Ascending aorta (tissue), 2 donors: ENCODE measurements at regions of chr10 and their contacts with region 1.

Region 1: DNA sequence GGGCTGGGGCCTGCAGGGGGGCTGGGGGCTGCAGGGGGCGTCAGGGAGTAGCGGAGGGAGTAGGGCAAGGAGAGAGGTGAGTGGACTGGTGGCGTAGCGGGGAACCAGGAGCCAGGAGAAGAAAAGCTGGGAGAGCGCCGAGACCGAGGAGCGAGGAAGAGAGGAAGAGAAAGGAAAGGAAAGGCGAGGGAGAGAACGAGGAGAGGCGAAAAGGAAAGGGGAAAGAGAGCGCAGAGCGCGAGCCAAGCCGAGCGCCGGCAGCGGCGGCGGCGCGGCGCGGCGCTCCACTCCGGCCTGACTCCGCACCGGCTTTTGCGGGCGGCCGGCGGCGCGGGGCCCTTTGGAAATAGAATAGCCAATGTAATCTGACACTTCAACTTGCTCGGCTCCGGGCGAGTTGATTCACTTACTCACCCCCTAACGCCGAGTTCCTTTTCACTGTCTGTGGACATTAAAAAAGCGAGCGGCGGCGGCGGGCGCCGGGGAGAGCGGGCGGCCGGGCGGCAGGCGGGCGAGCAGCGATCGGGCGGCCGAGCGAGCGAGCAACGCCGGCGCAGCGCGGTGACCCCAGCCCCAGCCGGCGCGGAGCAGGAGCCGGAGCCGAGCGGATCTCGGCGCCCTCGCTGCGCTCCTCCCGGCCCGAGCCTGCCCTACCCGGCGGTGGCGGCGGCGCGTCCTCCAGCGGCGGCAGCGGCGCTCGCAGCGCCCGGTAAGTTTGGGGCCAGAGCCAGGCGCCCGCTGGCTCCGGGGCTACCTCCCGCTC is at the start of gene ZMIZ1:
- DNase-seq: peak; percentile 63 to 95
- H3K4me3 ChIP-seq: peak within 1 kb of the TSS; percentile 90 to 98
- H3K27ac ChIP-seq: peak within 1 kb of the TSS; percentile 98 to 99
- H3K4me1 ChIP-seq: peaks cover 10 to 29% of the 10 kb centered on the region in 2 donors
- H3K27me3 ChIP-seq: no peaks in the 10 kb centered on the region
- CTCF ChIP-seq: peak in 2 of 3 experiments; percentile 8 to 38
- total RNA-seq, gene ZMIZ1: 96.2 TPM

Region 2: DNA sequence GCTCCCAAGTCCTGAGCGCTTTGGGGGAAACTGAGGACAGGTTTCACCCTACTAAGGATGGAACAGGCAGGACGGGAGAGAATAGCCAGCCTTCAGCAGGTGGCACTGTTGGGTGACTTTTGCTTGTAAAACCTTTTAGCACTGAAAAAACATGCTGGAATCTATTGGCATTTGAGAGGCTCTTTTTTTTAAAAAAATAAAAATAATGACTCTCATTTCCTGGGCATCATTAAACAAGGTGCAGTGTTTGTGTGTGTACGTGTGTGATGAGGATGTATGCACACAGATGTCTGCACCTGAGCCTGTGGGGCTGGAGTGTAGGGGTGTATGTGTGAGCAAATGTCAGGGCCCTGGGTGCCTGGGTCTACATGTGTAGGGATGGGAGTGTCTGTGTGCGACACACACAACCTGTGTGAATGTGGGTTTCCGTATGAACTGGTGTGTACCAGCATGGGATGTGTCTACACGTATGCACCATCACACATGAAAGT is 857.1 kb before region 1 on chr10:
- intact Hi-C with region 1: loop called (anchors 1 kb)
- DNase-seq: no peak
- H3K4me3 ChIP-seq: no peak overlapping the region
- H3K27ac ChIP-seq: no peak overlapping the region
- H3K4me1 ChIP-seq: peaks cover 4 to 13% of the 10 kb centered on the region in 2 donors
- H3K27me3 ChIP-seq: no peaks in the 10 kb centered on the region
- CTCF ChIP-seq: peak; percentile 42 to 72 (median 45)

Region 3: GRCh38 chr10:78543749-78544362 is 524.9 kb before region 1 on chr10:
- intact Hi-C with region 1: loop called (anchors 10 kb)
- DNase-seq: peak in 1 of 2 donors; percentile 89
- H3K4me3 ChIP-seq: no peak overlapping the region
- H3K27ac ChIP-seq: peak overlapping the region; percentile 39 to 53
- H3K4me1 ChIP-seq: peaks cover 0 to 5% of the 10 kb centered on the region in 2 donors
- H3K27me3 ChIP-seq: no peaks in the 10 kb centered on the region
- CTCF ChIP-seq: no peak

Region 4: DNA sequence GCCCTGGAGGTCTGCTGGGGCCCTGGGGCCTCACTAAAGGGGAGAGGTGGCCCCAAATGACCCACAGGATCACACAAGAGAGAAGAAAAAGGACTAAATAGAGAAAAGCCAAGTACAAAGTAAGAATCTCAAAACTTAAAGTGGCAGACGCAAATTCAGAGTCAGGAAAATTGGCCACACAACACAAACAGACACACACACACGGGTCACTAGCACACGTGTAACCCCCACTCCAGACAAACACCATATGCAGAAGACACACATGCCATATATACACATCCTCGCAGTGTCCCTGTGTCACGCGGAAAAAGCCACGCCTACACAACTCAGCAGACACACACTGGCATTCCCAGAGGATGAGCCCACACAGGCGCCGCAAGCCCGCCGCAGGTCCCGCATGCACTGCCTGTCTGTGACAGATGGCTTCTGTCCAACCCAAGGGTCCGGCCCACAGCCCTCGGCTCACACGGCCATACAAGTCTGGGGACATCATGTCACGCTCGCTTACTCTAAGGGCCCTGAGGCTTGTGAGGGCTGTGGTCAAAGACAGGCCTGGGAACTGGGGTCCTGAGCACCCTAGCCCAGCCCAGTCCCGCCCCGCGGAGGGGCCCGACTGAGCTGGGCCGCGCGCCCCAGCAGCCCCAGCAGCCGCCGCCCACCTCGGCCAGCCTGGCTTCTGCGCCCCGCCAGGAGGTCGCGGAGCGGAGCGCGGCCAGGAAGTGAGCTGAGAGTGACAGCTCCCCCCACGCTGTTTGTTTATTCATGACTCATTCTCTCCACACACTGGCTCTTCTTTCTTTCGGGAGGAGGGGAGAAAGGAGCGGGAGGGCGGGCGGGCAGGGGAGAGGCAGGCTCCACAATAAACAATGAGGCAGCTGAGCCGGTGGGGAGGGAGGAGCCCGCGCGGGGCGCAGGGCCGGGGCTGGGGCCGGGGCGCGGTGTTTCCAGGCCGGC is 95.5 kb before region 1 on chr10:
- intact Hi-C with region 1: loop called (anchors 1 kb)
- DNase-seq: peak; percentile 49 to 90
- H3K4me3 ChIP-seq: peak overlapping the region; percentile 64 to 67
- H3K27ac ChIP-seq: peak overlapping the region; percentile 95 to 98
- H3K4me1 ChIP-seq: peaks cover 6 to 22% of the 10 kb centered on the region in 2 donors
- H3K27me3 ChIP-seq: no peaks in the 10 kb centered on the region
- CTCF ChIP-seq: no peak

Region 5: DNA sequence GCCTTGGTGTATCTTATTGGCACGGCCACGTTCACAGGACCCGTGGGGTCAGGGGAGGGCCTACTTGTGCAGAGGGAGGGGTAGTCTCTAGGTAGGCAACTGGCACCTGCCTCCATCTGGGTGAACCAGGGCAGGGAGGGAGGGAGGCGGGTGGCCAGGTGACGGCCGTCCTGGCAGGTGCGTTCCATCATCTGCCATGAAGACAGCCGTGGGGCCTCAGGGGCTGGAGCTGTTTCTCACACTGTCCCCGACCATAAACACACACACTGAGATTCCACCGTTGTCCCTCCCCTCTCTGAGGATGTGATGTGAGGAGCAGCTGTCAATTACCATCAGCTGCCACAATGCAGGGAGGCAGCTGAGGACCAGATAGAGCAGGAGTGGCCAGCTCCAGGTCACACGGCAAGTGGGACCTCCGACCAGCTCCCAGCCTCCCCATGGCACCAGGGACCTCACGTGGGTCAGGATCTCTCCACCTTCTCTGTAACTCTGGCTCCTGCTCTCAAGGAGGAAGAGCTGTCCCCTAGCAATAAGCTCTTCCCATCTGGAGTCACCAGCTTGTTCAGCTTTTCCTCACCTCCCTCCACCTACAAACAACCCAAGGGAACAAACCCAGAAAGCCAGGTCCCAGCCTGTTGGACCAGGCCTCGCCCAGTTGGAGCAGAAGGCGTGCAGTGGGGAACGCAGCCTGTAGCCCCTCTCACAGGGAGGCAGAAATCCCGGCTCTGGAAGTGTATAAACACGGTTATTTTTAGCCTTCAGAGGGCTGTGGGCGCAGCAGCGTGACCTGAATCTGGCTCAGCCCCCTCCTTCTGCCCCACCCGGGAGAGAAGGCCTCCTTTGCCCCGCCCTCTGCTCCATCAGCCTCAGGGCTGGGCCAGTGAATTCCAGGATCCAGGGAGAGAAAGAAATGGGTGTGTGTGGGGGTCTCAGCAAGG is 33.1 kb after region 1 on chr10:
- intact Hi-C with region 1: loop called (anchors 1 kb)
- DNase-seq: peak in 1 of 2 donors; percentile 82
- H3K4me3 ChIP-seq: peak overlapping the region in 1 of 2 donors; percentile 8
- H3K27ac ChIP-seq: peak overlapping the region; percentile 79 to 86
- H3K4me1 ChIP-seq: peaks cover 31 to 67% of the 10 kb centered on the region in 2 donors
- H3K27me3 ChIP-seq: no peaks in the 10 kb centered on the region
- CTCF ChIP-seq: no peak

Region 6: GRCh38 chr10:79155301-79156081 is 86.7 kb after region 1 on chr10:
- intact Hi-C with region 1: loop called (anchors 1 kb)
- DNase-seq: peak in 1 of 2 donors; percentile 84
- H3K4me3 ChIP-seq: no peak overlapping the region
- H3K27ac ChIP-seq: peak overlapping the region; percentile 87 to 88
- H3K4me1 ChIP-seq: peaks cover 56 to 100% of the 10 kb centered on the region in 2 donors
- H3K27me3 ChIP-seq: no peaks in the 10 kb centered on the region
- CTCF ChIP-seq: peak in 1 of 3 experiments; percentile 24

Region 7: GRCh38 chr10:79242620-79243152 is 173.9 kb after region 1 on chr10:
- intact Hi-C with region 1: loop called (anchors 5 kb)
- DNase-seq: peak in 1 of 2 donors; percentile 80
- H3K4me3 ChIP-seq: peak overlapping the region; percentile 81 to 82
- H3K27ac ChIP-seq: peak overlapping the region; percentile 66 to 96
- H3K4me1 ChIP-seq: peaks cover 28 to 52% of the 10 kb centered on the region in 2 donors
- H3K27me3 ChIP-seq: no peaks in the 10 kb centered on the region
- CTCF ChIP-seq: no peak